Left lung (tissue), 14 donors: ENCODE measurements at regions of chr7 and their contacts with region 1.

Region 1: GRCh38 chr7:148962823-148963582 is 65.3 kb downstream of the PDIA4 start:
- DNase-seq: peak in 3 of 4 donors; percentile 66 to 89 (median 84)
- ATAC-seq: peak; percentile 85
- H3K4me3 ChIP-seq: peak overlapping the region; percentile 33 to 54
- H3K27ac ChIP-seq: peak overlapping the region; percentile 33 to 82
- H3K4me1 ChIP-seq: peaks cover 0 to 12% of the 10 kb centered on the region in 2 donors
- H3K27me3 ChIP-seq: no peaks in the 10 kb centered on the region
- CTCF ChIP-seq: peak; percentile 34 to 56

Region 2: DNA sequence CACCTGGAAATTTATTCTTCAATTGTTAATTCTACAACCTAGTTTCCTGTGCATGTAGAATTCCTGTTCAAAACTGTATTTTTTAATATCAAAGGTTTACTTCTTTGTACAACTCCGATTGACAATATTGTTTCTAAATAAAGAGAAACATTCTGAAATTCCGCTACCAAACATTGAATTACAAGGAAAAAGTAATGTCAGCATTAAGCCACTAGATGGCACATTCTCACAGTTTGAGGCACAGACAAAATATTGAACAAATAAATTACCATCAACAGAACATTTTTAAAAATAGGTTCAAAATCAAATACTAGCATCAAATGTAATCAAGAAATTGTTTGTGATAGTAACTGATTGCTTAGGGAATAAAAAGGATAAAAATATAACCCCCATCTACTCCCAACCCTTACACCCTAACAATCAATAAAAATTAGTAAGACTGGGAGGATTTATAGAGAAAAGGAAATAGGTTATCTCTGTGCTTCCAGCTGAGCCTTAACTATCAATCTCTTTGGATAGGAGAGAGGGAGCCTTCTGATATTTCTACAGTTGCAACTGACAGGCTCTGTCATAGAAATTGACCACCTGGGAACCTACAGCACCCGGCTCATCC is 459.0 kb before region 1 on chr7:
- intact Hi-C with region 1: loop called in 1 of 2 experiments (anchors 10 kb)
- DNase-seq: peak in 1 of 4 donors; percentile 42
- ATAC-seq: peak; percentile 49
- H3K4me3 ChIP-seq: no peak overlapping the region
- H3K27ac ChIP-seq: no peak overlapping the region
- H3K4me1 ChIP-seq: no peaks in the 10 kb centered on the region
- H3K27me3 ChIP-seq: peaks cover 11 to 39% of the 10 kb centered on the region in 2 donors
- CTCF ChIP-seq: peak; percentile 56 to 70

Region 3: DNA sequence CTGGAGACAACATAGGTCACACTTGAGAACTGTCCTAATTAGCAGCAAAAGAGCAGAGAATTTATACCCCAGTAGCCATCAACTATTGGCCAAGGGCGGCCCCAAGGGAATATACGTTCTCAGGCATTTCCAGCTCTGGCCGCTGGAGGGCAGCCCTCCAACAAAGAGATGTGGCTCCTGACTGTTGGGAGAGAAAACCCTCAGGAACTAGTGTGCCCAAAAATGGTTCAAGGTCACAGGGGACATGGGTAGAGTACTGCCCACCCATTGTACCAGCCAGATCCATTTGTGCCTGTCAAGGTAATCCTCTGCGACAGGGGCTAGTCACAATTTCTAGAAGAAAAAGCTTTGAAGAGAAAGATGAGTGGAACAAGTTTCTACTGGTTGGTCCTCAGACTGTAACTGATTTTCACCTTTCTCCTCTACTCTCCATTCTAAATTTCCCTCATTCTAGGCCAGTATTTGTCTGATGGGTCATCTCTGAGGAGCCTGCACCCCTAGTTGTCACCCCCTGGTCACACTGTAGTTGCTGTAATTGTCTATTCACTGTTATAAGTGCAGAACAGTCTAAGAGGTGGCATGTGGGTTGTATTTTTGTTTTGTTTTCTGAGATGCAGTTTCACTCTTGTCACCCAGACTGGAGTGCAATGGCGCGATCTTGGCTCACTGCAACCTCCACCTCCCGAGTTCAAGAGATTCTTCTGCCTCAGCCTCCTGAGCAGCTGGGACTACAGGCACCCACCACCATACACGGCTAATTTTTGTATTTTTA is 387.2 kb before region 1 on chr7:
- intact Hi-C with region 1: loop called (anchors 10 kb)
- DNase-seq: peak; percentile 53 to 86 (median 62)
- ATAC-seq: peak; percentile 95
- H3K4me3 ChIP-seq: no peak overlapping the region
- H3K27ac ChIP-seq: no peak overlapping the region
- H3K4me1 ChIP-seq: no peaks in the 10 kb centered on the region
- H3K27me3 ChIP-seq: no peaks in the 10 kb centered on the region
- CTCF ChIP-seq: peak; percentile 72 to 80

Region 4: GRCh38 chr7:148867596-148868377 is 95.2 kb before region 1 on chr7:
- intact Hi-C with region 1: no loop called
- DNase-seq: no peak
- ATAC-seq: no peak
- H3K4me3 ChIP-seq: no peak overlapping the region
- H3K27ac ChIP-seq: no peak overlapping the region
- H3K4me1 ChIP-seq: no peaks in the 10 kb centered on the region
- H3K27me3 ChIP-seq: no peaks in the 10 kb centered on the region
- CTCF ChIP-seq: no peak